IMR-90 (cell line): ENCODE measurements at regions of chr7 and their contacts with region 1.

Region 1: GRCh38 chr7:52540041-52540440 is 495.4 kb upstream of the POM121L12 start:
- DNase-seq: no peak
- ATAC-seq: no peak
- H3K4me3 ChIP-seq: no peak overlapping the region
- H3K27ac ChIP-seq: no peak overlapping the region
- H3K4me1 ChIP-seq: no peaks in the 10 kb centered on the region
- H3K27me3 ChIP-seq: no peaks in the 10 kb centered on the region
- CTCF ChIP-seq: no peak
- POLR2A ChIP-seq: no peak
- RAD21 ChIP-seq: no peak

Region 2: GRCh38 chr7:52355049-52355448 is 185.0 kb before region 1 on chr7:
- CTCF ChIA-PET with region 1: no interaction called
- POLR2A ChIA-PET with region 1: no interaction called
- dilution Hi-C with region 1: no loop called
- in situ Hi-C with region 1: no loop called
- intact Hi-C with region 1: no loop called
- DNase-seq: no peak
- ATAC-seq: no peak
- H3K4me3 ChIP-seq: no peak overlapping the region
- H3K27ac ChIP-seq: no peak overlapping the region
- H3K4me1 ChIP-seq: no peaks in the 10 kb centered on the region
- H3K27me3 ChIP-seq: no peaks in the 10 kb centered on the region
- CTCF ChIP-seq: no peak
- POLR2A ChIP-seq: no peak
- RAD21 ChIP-seq: no peak

Region 3: DNA sequence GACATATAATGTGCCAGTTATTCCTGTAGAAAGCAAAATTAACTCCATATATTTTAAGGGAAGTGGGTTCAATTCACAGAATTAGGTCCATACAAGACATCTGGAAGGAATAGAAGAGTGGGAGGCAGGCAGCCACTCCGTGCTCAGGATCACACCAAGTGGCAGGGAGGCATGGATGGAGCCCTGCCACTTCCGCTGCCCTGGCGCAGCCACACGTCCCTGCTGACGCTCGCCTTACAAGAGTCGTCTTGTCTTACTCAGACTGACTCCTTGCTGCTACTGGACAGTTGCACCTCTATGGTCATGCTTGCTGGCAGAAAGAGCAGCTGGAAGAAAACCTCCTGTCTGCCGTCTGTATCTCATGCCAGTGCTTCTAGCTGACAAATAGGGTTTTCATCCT is 84.5 kb before region 1 on chr7:
- CTCF ChIA-PET with region 1: no interaction called
- POLR2A ChIA-PET with region 1: no interaction called
- dilution Hi-C with region 1: no loop called
- in situ Hi-C with region 1: no loop called
- intact Hi-C with region 1: no loop called
- DNase-seq: no peak
- ATAC-seq: no peak
- H3K4me3 ChIP-seq: no peak overlapping the region
- H3K27ac ChIP-seq: no peak overlapping the region
- H3K4me1 ChIP-seq: no peaks in the 10 kb centered on the region
- H3K27me3 ChIP-seq: no peaks in the 10 kb centered on the region
- CTCF ChIP-seq: no peak
- POLR2A ChIP-seq: no peak
- RAD21 ChIP-seq: no peak

Region 4: GRCh38 chr7:52555805-52556204 is 15.8 kb after region 1 on chr7:
- CTCF ChIA-PET with region 1: no interaction called
- POLR2A ChIA-PET with region 1: no interaction called
- dilution Hi-C with region 1: no loop called
- in situ Hi-C with region 1: no loop called
- intact Hi-C with region 1: loop called (anchors 1 kb)
- DNase-seq: no peak
- ATAC-seq: no peak
- H3K4me3 ChIP-seq: no peak overlapping the region
- H3K27ac ChIP-seq: no peak overlapping the region
- H3K4me1 ChIP-seq: no peaks in the 10 kb centered on the region
- H3K27me3 ChIP-seq: no peaks in the 10 kb centered on the region
- CTCF ChIP-seq: no peak
- POLR2A ChIP-seq: no peak
- RAD21 ChIP-seq: no peak